Activated CD8-positive, alpha-beta T cell treated with anti-CD3 and anti-CD28 coated beads for 36 hours (primary cell): ENCODE measurements at regions of chr14 and their contacts with region 1.

Region 1: DNA sequence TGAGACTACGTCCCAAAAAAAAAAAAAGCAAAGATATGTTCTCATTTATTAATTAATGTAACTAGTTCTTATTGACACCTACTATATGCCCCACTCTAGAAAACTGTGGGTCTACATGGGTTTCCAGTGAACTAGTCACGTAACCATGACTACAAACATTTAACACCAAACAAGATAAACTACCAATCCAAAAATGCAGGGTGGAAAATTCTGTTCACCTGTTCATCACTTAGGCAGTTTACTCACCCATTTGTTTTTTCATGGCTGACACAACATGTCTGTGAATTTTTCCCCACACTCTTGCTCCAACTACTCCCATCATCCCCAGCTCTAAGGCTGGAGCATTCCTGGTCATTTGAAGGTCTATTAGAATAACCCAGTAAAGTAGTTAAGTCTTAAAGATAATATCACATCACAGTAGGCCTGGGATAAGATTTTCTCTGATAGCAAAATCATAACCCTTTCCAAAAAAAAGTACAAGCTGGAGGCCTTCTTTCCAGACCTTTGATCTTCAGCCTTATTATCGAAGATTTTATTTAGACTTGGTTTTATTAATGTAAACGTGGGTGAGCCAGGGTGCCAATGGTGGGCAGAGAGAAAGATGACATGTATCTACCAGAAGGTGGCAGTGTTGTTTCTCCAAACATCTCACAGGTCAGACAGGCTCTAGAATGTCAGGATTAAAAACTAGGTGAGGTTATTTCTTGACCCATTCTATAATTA is 61.6 kb upstream of the DAAM1 start:
- DNase-seq: peak; percentile 35
- ATAC-seq: peak; percentile 75
- H3K4me3 Mint-ChIP-seq: no peak overlapping the region
- H3K27ac Mint-ChIP-seq: no peak overlapping the region
- H3K4me1 Mint-ChIP-seq: no peaks in the 10 kb centered on the region
- H3K27me3 Mint-ChIP-seq: peaks cover 12% of the 10 kb centered on the region
- CTCF ChIP-seq: peak; percentile 84

Region 2: GRCh38 chr14:59438195-59438647 is 311.4 kb after region 1 on chr14:
- CTCF ChIA-PET with region 1: interaction called, 22 read pairs
- POLR2A ChIA-PET with region 1: no interaction called
- intact Hi-C with region 1: no loop called
- DNase-seq: no peak
- ATAC-seq: no peak
- H3K4me3 Mint-ChIP-seq: no peak overlapping the region
- H3K27ac Mint-ChIP-seq: no peak overlapping the region
- H3K4me1 Mint-ChIP-seq: no peaks in the 10 kb centered on the region
- H3K27me3 Mint-ChIP-seq: no peaks in the 10 kb centered on the region
- CTCF ChIP-seq: no peak